Adrenal gland (tissue), 19 donors: ENCODE measurements at regions of chr12 and their contacts with region 1.

Region 1: GRCh38 chr12:57111031-57111734 is at the start of gene STAT6:
- DNase-seq: peak; percentile 79 to 92 (median 88)
- H3K4me3 ChIP-seq: peak within 1 kb of the TSS; percentile 27 to 98 (median 72)
- H3K27ac ChIP-seq: peak within 1 kb of the TSS; percentile 76 to 100 (median 99)
- H3K4me1 ChIP-seq: peaks cover 12 to 34% of the 10 kb centered on the region in 2 donors
- H3K27me3 ChIP-seq: no peaks in the 10 kb centered on the region
- CTCF ChIP-seq: peak in 3 of 6 experiments; percentile 15 to 18 (median 16)
- POLR2A ChIP-seq: peak; percentile 25 to 73
- total RNA-seq, gene STAT6: 71.9 to 227 (median 153) TPM

Region 2: DNA sequence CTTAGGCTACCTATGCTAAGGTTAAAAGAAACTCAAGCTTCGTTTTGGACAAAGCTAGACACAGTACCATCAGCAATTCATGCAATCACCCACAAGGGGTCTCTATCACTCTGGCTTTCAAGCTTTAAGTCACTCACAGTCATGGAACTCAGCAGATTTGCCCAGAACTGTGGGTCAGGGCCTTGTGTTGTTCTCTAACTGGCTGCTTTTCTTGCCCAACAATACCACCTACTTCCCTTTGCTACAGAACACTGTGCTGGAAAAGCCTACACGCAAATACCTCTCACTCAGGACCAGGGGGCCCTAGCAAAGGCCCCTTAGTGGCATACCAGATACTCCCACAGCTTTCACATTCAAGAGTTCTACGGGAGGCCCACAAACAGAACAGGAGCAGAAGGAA is 41.7 kb before region 1 on chr12:
- intact Hi-C with region 1: loop called in 1 of 2 experiments (anchors 2 kb)
- DNase-seq: peak; percentile 76 to 93 (median 85)
- H3K4me3 ChIP-seq: no peak overlapping the region
- H3K27ac ChIP-seq: peak overlapping the region in 4 of 5 donors; percentile 47 to 84 (median 70)
- H3K4me1 ChIP-seq: peaks cover 5 to 6% of the 10 kb centered on the region in 2 donors
- H3K27me3 ChIP-seq: no peaks in the 10 kb centered on the region
- CTCF ChIP-seq: peak; percentile 76 to 98 (median 95)
- POLR2A ChIP-seq: peak in 1 of 2 donors; percentile 4

Region 3: DNA sequence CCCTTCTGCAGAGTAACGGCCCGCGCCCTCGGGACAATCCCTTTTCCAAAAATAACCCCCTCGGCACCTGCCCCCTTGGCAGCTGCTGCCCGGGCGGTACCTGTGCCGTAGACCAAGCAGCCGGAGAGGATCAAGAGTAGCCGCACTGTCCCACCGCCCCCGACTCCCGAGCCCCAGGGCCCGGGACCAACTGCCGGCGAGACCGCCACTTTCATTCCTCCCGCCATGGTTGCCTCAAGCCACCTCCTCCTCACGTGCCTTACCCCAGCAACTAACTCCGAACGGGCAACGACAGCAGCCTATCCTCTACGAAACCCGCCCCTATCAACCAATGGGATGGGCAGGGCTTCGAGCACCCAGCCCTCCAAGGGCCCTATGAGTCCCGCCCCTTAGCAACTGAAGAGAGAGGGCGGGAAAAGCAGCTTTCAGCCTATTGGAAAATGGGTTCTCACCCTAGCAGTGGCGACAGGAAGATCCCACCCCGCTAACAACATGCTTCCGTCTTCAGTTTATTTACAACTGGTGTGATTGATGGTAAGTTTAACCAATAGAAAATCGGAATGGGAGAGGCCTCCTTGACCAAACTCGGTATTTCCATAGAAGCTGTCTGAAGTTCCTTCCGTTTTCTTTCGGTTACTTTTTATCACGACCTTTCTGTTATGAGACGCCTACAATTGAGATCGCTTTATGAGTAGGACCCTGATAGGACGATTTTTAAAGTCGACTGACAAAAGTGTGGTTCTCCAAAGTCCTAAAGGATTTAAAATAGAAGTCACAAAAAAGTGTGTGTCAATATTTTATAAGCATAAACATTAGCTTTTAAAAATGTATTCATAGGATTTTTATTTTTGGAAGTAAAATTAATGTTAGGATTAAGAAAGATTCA is 32.4 kb before region 1 on chr12 and contains the start of gene NEMP1:
- intact Hi-C with region 1: loop called in 1 of 2 experiments (anchors 5 kb)
- DNase-seq: peak; percentile 96 to 100 (median 99)
- H3K4me3 ChIP-seq: peak within 1 kb of the TSS in 3 of 4 donors; percentile 54 to 77 (median 64)
- H3K27ac ChIP-seq: peak within 1 kb of the TSS; percentile 23 to 83 (median 73)
- H3K4me1 ChIP-seq: peaks cover 12 to 19% of the 10 kb centered on the region in 2 donors
- H3K27me3 ChIP-seq: no peaks in the 10 kb centered on the region
- CTCF ChIP-seq: no peak
- POLR2A ChIP-seq: peak in 1 of 2 donors; percentile 63
- total RNA-seq, gene NEMP1: 5.8 to 16.4 (median 10.0) TPM

Region 4: DNA sequence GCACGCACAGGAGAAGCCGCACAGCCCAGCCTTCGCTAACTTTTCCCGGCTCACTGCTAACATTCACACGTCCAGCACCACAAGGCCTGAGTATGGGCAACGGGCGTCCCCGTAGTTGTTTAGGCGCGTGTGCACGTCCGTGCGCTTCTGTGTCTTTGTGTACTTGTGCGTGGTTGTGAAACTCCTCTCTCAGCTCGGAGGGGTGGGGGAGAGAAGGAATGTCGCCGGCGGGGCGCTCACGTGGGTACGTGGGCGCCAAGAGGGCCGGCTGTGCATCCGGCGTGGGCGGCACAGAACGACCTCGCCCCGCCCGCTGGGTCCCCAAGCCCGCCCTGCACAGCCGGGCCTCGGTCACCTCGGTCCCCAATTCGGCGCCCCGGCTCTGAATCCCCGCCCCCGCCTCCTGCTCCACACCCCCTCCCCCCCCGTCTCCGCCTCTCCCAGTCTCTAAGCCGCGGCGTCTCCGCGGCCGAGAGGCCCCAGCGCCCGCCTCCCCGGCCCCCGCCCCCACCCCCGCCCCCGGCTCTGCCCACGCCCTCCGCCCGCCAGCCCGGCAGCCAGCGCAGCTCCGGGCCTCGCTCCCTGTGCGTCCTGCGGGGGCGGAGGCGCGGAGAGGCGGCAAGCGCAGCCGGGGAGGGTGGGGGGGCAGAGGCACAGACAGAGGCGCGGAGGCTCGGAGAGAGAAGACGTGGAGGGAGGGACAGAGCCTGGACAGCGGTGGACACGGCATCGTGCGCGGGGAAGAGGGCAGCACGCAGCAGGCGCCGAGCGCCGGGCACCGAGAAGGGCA is 22.5 kb before region 1 on chr12 and contains the start of gene NAB2:
- intact Hi-C with region 1: loop called in 1 of 2 experiments (anchors 2 kb)
- DNase-seq: peak; percentile 95 to 99 (median 98)
- H3K4me3 ChIP-seq: peak within 1 kb of the TSS; percentile 36 to 81 (median 64)
- H3K27ac ChIP-seq: peak within 1 kb of the TSS; percentile 98 to 99 (median 99)
- H3K4me1 ChIP-seq: peaks cover 13 to 39% of the 10 kb centered on the region in 2 donors
- H3K27me3 ChIP-seq: no peaks in the 10 kb centered on the region
- CTCF ChIP-seq: no peak
- POLR2A ChIP-seq: peak; percentile 36 to 93
- total RNA-seq, gene NAB2: 11.4 to 36.0 (median 18.1) TPM